Ascending aorta (tissue), 2 donors: ENCODE measurements at regions of chr19 and their contacts with region 1.

Region 1: DNA sequence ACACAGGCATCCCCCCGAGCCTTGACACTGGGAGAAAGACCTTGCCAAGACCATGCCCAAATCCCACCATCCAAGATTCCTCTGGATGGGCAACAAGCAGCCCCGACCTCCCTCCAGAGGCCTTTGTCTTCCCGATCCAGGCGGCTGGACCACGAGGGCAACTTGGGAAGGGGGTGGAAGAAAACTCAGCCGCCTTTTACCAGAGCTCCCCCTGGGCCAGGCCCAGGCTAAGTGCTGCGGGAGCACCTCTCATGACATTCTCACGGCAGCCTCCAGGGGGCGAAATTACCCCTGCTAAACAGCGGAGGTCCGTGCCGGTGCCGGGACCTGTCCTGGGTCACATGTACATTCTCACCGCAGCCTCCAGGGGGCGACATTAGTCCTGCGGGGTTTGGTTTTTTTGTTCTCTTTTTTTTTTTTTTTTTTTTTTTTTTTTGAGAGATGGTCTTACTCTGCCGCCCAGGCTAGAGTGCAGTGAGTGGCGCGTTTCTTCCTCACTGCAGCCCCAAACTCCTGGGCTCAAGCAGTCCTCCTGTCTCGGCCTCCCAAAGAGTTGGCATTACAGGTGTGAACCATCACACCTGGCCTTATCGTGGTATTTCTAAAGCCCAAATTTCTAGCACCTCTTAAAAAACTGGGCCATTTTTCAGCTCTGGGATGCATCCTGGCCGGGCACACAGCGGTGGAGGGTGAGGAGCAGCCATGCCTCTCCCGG is 2.1 kb upstream of the RSPH6A start:
- DNase-seq: peak; percentile 59 to 96
- H3K4me3 ChIP-seq: no peak overlapping the region
- H3K27ac ChIP-seq: no peak overlapping the region
- H3K4me1 ChIP-seq: peaks cover 0 to 4% of the 10 kb centered on the region in 2 donors
- H3K27me3 ChIP-seq: no peaks in the 10 kb centered on the region
- CTCF ChIP-seq: peak; percentile 94 to 99 (median 95)

Region 2: GRCh38 chr19:45792470-45793177 is 24.5 kb before region 1 on chr19 and contains the start of gene DMWD:
- intact Hi-C with region 1: no loop called
- DNase-seq: peak; percentile 95 to 100
- H3K4me3 ChIP-seq: peak within 1 kb of the TSS; percentile 68 to 87
- H3K27ac ChIP-seq: peak within 1 kb of the TSS; percentile 60 to 74
- H3K4me1 ChIP-seq: peaks cover 0 to 10% of the 10 kb centered on the region in 2 donors
- H3K27me3 ChIP-seq: no peaks in the 10 kb centered on the region
- CTCF ChIP-seq: no peak
- total RNA-seq, gene DMWD: 110 TPM

Region 3: DNA sequence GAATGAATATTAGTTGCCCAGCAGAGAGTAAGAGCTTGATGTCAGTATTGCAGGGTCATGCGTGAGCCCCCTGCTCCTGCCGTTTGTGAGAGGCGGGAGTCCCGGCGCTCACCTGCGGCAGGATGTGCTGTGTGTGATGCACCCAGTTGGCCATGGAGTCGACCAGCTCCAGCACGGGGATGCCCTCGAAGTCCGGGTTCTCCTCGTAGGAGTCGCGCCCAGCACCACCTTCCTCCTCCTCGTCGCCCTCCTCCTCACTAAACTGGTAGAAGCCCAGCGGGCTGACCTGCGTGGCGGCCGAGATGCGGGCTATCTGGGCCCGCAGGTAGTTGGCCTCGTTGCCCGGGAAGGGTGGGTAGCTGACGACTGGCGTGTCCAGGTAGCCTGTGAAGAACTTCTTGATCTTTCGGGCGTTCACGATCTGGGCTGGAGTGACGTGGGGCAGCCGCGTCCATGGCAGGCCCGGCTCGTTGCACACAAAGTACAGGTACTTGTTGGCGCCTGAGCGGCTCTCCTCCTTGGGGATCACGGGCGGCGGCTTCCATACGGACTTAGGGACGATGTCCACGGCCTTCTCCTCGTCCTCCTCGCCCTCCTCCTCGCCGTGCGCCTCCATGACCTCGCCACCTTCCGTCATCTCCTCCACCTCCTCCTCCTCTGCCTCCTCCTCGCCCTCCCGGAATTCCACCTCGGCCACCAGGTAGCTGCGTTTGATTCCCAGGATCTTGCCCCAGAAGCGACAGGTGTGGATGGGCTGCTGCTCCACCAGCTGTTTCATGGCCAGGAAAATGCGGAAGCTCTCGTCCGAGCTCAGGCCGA is 12.8 kb before region 1 on chr19:
- intact Hi-C with region 1: no loop called
- DNase-seq: no peak
- H3K4me3 ChIP-seq: no peak overlapping the region
- H3K27ac ChIP-seq: no peak overlapping the region
- H3K4me1 ChIP-seq: no peaks in the 10 kb centered on the region
- H3K27me3 ChIP-seq: no peaks in the 10 kb centered on the region
- CTCF ChIP-seq: no peak

Region 4: GRCh38 chr19:45834970-45835369 is 17.8 kb after region 1 on chr19:
- intact Hi-C with region 1: no loop called
- DNase-seq: no peak
- H3K4me3 ChIP-seq: no peak overlapping the region
- H3K27ac ChIP-seq: no peak overlapping the region
- H3K4me1 ChIP-seq: no peaks in the 10 kb centered on the region
- H3K27me3 ChIP-seq: no peaks in the 10 kb centered on the region
- CTCF ChIP-seq: no peak

Region 5: GRCh38 chr19:45895519-45895972 is 78.4 kb after region 1 on chr19:
- intact Hi-C with region 1: no loop called
- DNase-seq: no peak
- H3K4me3 ChIP-seq: no peak overlapping the region
- H3K27ac ChIP-seq: no peak overlapping the region
- H3K4me1 ChIP-seq: peaks cover 0 to 1% of the 10 kb centered on the region in 2 donors
- H3K27me3 ChIP-seq: no peaks in the 10 kb centered on the region
- CTCF ChIP-seq: no peak

Region 6: GRCh38 chr19:46016426-46017094 is 199.4 kb after region 1 on chr19:
- intact Hi-C with region 1: loop called (anchors 5 kb)
- DNase-seq: peak in 1 of 2 donors; percentile 83
- H3K4me3 ChIP-seq: peak overlapping the region; percentile 76 to 80
- H3K27ac ChIP-seq: peak overlapping the region in 1 of 2 donors; percentile 37
- H3K4me1 ChIP-seq: peaks cover 12 to 17% of the 10 kb centered on the region in 2 donors
- H3K27me3 ChIP-seq: no peaks in the 10 kb centered on the region
- CTCF ChIP-seq: peak; percentile 75 to 96 (median 90)